Calu3 (cell line): ENCODE measurements at regions of chr6 and their contacts with region 1.

Region 1: DNA sequence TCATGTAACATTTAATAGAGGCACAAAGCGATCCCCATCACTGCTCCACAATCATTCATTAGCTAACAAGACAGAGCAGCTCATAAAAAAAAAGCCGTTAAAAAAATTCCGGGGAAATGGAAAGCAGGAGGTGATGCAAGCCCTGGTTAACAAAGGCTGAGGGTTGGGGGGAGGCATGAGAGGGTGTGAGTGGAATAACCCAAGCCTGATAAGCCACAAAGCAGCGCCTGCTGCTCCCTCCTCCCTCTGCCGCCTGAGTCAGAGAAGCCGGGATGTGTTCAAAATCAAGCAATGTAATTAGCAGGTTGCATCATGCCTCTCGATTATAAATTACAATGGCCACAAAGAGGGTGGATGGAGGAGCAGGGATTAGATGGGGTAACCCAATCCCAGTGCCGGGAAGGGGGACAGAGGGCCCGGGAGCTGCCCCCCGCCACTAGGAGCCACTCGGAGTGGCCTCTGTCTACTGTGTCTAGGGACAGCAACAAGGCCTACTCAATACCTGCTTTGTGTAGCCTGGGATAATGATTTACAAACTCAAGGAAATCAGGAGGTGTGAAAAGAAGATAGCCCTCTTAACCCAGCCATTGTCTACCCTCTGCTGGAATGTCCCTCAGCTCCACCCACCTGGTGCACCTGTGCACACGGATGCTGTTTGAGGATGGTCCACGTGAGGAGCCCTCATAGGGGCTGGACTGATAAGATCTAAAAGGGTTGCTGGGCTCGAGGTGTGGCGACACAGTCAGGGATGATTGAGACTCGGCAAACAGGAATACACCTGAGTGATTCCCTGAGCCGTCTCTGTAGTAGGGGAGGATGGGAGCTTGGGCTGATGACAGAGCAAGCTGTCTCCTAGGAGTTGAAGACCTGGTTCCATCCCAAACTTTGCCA is 156.9 kb downstream of the VEGFA start:
- DNase-seq: peak; percentile 98
- H3K4me3 Mint-ChIP-seq: peak overlapping the region; percentile 41
- H3K27ac Mint-ChIP-seq: peak overlapping the region; percentile 97
- H3K4me1 Mint-ChIP-seq: peaks cover 36% of the 10 kb centered on the region
- H3K27me3 Mint-ChIP-seq: no peaks in the 10 kb centered on the region
- CTCF ChIP-seq: no peak

Region 2: DNA sequence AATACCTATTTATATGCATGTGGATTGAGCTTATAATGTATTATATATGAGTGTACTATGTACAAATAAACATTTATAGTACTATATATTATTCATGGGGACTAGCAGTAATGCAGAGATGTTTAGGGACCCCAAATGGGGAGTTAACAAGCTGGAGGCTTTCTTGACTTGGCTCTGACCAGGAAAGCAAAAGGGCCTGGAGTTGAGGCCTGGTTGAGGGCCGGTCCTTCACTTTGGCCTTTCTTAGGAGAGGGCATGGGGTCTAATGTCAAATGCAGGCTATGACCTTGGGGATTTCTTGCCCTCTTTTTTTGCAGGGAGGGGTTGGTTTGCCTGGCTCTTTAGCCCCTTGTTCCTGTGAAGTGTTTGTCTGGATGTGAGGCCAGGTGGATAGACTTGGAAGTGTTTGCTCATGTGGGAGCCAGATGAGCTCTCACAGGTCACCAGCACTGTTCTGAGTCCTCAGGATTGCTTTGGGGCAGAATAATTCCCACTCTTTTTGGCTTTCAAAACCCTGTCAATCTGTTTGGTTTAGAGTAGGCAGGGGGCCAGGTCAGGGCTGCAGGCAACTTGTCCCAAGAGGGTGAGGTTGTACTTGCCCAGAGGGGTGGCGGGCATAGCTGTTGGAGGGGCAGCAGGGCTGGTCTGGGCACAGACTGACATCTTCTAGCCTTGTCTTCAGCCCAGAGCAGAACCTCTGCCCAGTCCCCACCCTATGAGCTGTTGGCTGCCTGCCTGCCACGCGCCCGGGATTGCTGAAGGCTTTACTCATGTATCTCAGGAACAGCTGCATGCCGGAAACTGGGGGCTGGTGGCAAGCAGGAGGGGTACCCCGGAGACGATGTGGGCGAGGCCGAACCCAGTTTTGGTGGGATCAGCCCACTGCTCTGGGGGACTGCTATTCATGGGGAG is 434.9 kb before region 1 on chr6:
- CTCF ChIA-PET with region 1: no interaction called
- intact Hi-C with region 1: no loop called
- DNase-seq: peak; percentile 44
- H3K4me3 Mint-ChIP-seq: no peak overlapping the region
- H3K27ac Mint-ChIP-seq: no peak overlapping the region
- H3K4me1 Mint-ChIP-seq: peaks cover 35% of the 10 kb centered on the region
- H3K27me3 Mint-ChIP-seq: no peaks in the 10 kb centered on the region
- CTCF ChIP-seq: no peak

Region 3: GRCh38 chr6:43769526-43770416 is 157.1 kb before region 1 on chr6 and contains the start of gene VEGFA:
- CTCF ChIA-PET with region 1: interaction called, 30 read pairs
- intact Hi-C with region 1: loop called (anchors 1 kb)
- DNase-seq: peak; percentile 97
- H3K4me3 Mint-ChIP-seq: peak within 1 kb of the TSS; percentile 87
- H3K27ac Mint-ChIP-seq: peak within 1 kb of the TSS; percentile 95
- H3K4me1 Mint-ChIP-seq: peaks cover 52% of the 10 kb centered on the region
- H3K27me3 Mint-ChIP-seq: no peaks in the 10 kb centered on the region
- CTCF ChIP-seq: peak; percentile 99
- total RNA-seq, gene VEGFA: 345 and 407 TPM in 2 replicates

Region 4: GRCh38 chr6:43774776-43775534 is 151.9 kb before region 1 on chr6:
- CTCF ChIA-PET with region 1: interaction called, 30 read pairs
- intact Hi-C with region 1: loop called (anchors 1 kb)
- DNase-seq: peak; percentile 88
- H3K4me3 Mint-ChIP-seq: peak overlapping the region; percentile 87
- H3K27ac Mint-ChIP-seq: peak overlapping the region; percentile 85
- H3K4me1 Mint-ChIP-seq: peaks cover 45% of the 10 kb centered on the region
- H3K27me3 Mint-ChIP-seq: no peaks in the 10 kb centered on the region
- CTCF ChIP-seq: peak; percentile 98

Region 5: GRCh38 chr6:43856005-43856765 is 70.7 kb before region 1 on chr6:
- CTCF ChIA-PET with region 1: interaction called, 42 read pairs
- intact Hi-C with region 1: loop called (anchors 2 kb)
- DNase-seq: peak; percentile 86
- H3K4me3 Mint-ChIP-seq: no peak overlapping the region
- H3K27ac Mint-ChIP-seq: peak overlapping the region; percentile 72
- H3K4me1 Mint-ChIP-seq: peaks cover 63% of the 10 kb centered on the region
- H3K27me3 Mint-ChIP-seq: no peaks in the 10 kb centered on the region
- CTCF ChIP-seq: peak; percentile 94

Region 6: DNA sequence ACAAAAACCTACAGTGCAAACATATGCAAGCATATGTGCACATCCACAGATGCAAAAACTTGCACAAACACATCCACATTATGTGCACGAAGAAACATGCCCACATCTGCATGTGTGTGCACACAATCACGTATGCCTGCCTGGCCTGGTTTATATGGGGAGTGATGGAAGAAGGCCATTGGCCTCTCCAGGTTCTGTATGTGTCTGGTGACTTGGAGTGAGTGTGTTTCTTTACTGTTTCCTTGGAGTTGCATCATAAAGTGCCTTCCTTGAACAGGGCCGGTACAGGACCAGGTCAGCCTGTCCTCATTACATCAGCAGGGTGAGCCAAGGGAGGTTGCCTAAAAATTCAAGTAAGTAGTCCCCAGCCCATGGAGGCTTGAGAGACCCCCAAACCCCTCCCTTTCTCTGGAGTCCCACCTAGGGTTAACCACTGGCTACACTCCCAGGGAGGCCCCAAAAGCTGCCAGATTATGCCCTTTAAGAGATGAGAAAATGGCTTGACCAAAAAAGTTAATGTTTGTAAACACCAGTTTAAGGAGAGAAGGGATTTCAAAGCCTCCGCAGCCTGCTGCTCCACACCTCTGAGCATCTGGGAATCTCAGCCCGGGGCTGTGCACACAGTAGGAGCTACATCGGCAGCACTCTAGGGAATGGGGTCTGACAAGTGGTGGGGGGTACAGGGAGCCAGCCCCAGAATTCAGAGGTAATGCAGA is 16.1 kb before region 1 on chr6:
- CTCF ChIA-PET with region 1: interaction called, 43 read pairs
- intact Hi-C with region 1: no loop called
- DNase-seq: peak; percentile 44
- H3K4me3 Mint-ChIP-seq: peak overlapping the region; percentile 46
- H3K27ac Mint-ChIP-seq: peak overlapping the region; percentile 95
- H3K4me1 Mint-ChIP-seq: peaks cover 66% of the 10 kb centered on the region
- H3K27me3 Mint-ChIP-seq: no peaks in the 10 kb centered on the region
- CTCF ChIP-seq: no peak

Region 7: DNA sequence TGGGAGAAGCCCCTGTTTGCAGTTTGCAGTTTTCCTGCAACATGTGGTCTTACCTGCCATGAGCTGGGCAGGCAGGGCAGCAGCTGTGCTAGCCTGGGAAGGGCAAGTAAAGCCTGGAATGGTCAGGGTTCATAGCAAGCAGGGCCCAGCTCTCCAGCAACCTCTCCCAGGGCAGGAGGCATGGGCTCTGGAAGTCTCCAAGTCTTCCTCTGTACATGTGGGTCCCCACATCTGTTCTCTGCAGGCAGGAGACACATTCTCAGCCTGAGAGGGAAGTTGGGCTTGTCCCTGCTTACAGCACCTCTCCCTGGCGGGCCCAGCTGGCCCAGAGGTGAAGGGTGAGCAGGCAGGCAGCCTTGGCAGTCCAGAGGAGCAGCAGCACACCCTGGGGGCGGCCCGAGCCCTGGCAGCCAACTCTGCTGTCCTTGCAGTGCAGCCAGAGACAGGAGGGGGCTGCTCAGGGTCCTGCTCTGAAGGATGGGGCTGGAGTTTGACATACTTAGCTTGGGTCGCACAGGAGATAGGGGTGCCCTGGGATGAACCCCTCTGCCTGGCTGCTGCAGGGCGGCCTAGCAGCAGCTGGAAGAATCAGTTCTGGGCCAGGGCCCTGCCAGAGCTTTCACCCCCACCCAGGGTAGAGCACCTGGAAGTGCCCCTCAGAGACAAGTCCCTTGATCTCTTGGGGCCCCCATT is 24.3 kb after region 1 on chr6:
- CTCF ChIA-PET with region 1: interaction called, 50 read pairs
- intact Hi-C with region 1: no loop called
- DNase-seq: peak; percentile 91
- H3K4me3 Mint-ChIP-seq: no peak overlapping the region
- H3K27ac Mint-ChIP-seq: no peak overlapping the region
- H3K4me1 Mint-ChIP-seq: peaks cover 32% of the 10 kb centered on the region
- H3K27me3 Mint-ChIP-seq: no peaks in the 10 kb centered on the region
- CTCF ChIP-seq: peak; percentile 74

Region 8: GRCh38 chr6:43990627-43991619 is 64.0 kb after region 1 on chr6:
- CTCF ChIA-PET with region 1: interaction called, 17 read pairs
- intact Hi-C with region 1: no loop called
- DNase-seq: peak; percentile 56
- H3K4me3 Mint-ChIP-seq: no peak overlapping the region
- H3K27ac Mint-ChIP-seq: no peak overlapping the region
- H3K4me1 Mint-ChIP-seq: peaks cover 53% of the 10 kb centered on the region
- H3K27me3 Mint-ChIP-seq: no peaks in the 10 kb centered on the region
- CTCF ChIP-seq: no peak